ENCODE measurements at regions of chr3 and their contacts with region 1.

Region 1: DNA sequence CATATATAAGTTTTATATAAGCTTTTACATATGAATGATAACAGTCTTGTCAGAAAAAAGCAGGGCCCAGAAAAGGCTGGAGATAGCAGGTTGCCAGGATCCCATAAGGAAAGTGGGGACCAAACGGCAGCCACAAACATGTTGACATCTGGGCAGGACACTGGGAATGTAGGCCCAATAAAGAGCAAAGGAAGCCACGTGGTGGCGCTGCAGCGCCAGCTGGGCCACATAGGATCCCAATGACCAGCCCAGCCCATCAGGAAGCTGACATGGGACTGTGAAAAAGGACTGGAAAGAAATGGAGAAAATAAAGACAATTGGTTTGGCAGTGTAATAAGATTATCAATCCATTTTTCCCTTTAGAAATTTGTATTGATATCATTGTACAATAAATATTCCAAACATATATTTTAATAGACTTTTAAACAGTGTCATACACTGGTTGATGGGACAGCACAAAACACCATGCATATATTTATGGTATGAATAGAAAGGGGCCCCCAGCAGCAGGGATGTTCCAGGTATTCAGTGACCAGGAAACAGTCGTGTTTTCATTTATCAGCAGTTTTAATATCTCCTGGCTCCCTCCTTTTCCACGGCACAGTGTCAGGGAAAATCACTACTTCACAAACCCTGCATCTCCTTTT is 89.0 kb upstream of the STRIT1 start:
- DNase-seq: peak; percentile 75 to 85 (median 78)
- ATAC-seq: peak; percentile 84
- H3K4me3 ChIP-seq: no peak overlapping the region
- H3K27ac ChIP-seq: no peak overlapping the region
- H3K4me1 ChIP-seq: no peaks in the 10 kb centered on the region
- H3K27me3 ChIP-seq: no peaks in the 10 kb centered on the region
- CTCF ChIP-seq: peak; percentile 38 to 83 (median 70)
- POLR2A ChIP-seq: no peak

Region 2: DNA sequence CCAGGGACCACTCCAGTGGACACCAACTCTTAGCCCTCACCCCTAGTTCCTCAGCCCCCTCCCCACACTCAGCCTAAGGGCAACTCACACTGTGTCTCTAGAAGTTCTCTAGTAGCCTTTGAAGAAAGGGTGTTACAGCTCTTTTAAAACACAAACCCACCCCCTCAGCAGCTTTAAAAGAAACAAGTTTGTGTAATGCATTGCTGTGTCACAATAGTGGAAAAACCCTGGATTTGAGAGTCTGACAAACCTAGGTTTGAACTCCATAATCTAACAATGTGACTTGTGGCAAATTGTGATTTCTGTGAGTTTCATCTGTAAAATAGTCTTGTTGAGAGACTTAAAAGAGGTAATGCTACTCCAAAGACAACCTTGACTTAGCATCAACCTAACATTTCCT is 308.4 kb after region 1 on chr3:
- intact Hi-C with region 1: loop called (anchors 10 kb)
- DNase-seq: no peak
- ATAC-seq: no peak
- H3K4me3 ChIP-seq: no peak overlapping the region
- H3K27ac ChIP-seq: no peak overlapping the region
- H3K4me1 ChIP-seq: no peaks in the 10 kb centered on the region
- H3K27me3 ChIP-seq: no peaks in the 10 kb centered on the region
- CTCF ChIP-seq: no peak
- POLR2A ChIP-seq: no peak